Endothelial cell of umbilical vein (primary cell): ENCODE measurements at regions of chr9 and their contacts with region 1.

Region 1: GRCh38 chr9:121686930-121687541 is 35.6 kb downstream of the DAB2IP start:
- DNase-seq: peak; percentile 78
- H3K4me3 ChIP-seq: no peak overlapping the region
- H3K27ac ChIP-seq: no peak overlapping the region
- H3K4me1 ChIP-seq: no peaks in the 10 kb centered on the region
- H3K27me3 ChIP-seq: no peaks in the 10 kb centered on the region
- CTCF ChIP-seq: peak; percentile 90 to 91
- POLR2A ChIP-seq: no peak

Region 2: DNA sequence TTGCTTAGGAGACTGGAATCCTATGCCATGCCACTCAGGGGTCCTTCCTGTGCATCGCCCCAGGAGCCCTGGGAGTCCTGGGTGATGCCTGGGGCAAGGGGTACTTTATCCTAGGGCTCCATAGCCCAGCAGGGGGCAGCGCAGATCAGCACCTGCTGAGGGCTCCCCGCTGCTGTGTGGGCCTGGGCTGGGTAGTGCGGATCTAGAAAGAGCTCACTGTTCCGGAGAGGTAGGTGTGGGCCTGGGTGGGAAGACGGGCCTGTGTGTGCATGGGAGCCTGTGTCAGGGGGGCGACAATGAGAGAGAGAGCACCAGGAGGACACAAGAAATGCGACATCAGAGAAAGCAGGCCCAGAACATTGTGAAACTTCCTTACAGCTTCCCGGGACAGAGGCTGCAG is 47.0 kb before region 1 on chr9:
- CTCF ChIA-PET with region 1: interaction called, 143 read pairs
- POLR2A ChIA-PET with region 1: no interaction called
- dilution Hi-C with region 1: no loop called
- intact Hi-C with region 1: loop called (anchors 1 kb)
- DNase-seq: peak; percentile 36
- H3K4me3 ChIP-seq: no peak overlapping the region
- H3K27ac ChIP-seq: no peak overlapping the region
- H3K4me1 ChIP-seq: peaks cover 17% of the 10 kb centered on the region
- H3K27me3 ChIP-seq: no peaks in the 10 kb centered on the region
- CTCF ChIP-seq: peak; percentile 72 to 80
- POLR2A ChIP-seq: no peak

Region 3: DNA sequence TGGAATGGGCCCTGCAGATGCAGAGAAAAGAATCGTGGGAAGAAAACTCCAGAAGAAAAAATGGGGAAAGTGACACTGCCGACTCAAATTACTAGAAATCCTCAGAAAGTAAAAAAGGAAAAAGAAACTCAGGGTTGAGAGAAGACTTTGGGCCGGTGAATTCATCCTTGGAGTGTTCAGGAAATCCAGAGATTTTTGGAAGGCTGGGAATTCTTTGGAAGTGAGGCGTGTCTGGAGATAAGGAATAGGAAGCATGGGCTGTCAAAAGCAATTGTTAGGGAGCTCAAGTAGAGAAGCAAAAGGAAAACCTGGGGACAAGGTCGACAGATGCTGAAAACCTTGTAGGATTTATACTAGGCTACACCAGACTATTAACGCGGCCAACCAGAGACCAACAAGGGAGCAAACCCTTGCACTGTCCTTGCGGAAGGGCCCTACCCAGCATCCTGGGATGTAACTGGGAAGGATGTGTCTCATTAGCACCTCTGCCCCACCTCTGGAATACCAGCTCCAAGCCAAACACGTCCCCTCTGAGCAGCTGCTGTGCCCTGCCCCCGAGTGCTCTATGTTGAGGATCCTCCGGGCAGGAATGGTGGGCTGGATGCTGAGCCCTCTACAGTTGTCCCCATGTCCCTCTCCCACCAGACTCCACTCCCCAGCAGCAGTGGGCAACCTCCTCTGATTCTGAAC is 24.0 kb before region 1 on chr9:
- CTCF ChIA-PET with region 1: interaction called, 16 read pairs
- POLR2A ChIA-PET with region 1: no interaction called
- dilution Hi-C with region 1: no loop called
- intact Hi-C with region 1: no loop called
- DNase-seq: peak; percentile 49
- H3K4me3 ChIP-seq: no peak overlapping the region
- H3K27ac ChIP-seq: no peak overlapping the region
- H3K4me1 ChIP-seq: peaks cover 20% of the 10 kb centered on the region
- H3K27me3 ChIP-seq: no peaks in the 10 kb centered on the region
- CTCF ChIP-seq: no peak
- POLR2A ChIP-seq: no peak

Region 4: GRCh38 chr9:121698627-121699570 is 11.9 kb after region 1 on chr9:
- CTCF ChIA-PET with region 1: interaction called, 71 read pairs
- POLR2A ChIA-PET with region 1: no interaction called
- dilution Hi-C with region 1: no loop called
- intact Hi-C with region 1: loop called (anchors 1 kb)
- DNase-seq: peak; percentile 45
- H3K4me3 ChIP-seq: peak overlapping the region; percentile 59 to 62 (median 60)
- H3K27ac ChIP-seq: peak overlapping the region; percentile 84
- H3K4me1 ChIP-seq: peaks cover 13% of the 10 kb centered on the region
- H3K27me3 ChIP-seq: no peaks in the 10 kb centered on the region
- CTCF ChIP-seq: no peak
- POLR2A ChIP-seq: no peak

Region 5: DNA sequence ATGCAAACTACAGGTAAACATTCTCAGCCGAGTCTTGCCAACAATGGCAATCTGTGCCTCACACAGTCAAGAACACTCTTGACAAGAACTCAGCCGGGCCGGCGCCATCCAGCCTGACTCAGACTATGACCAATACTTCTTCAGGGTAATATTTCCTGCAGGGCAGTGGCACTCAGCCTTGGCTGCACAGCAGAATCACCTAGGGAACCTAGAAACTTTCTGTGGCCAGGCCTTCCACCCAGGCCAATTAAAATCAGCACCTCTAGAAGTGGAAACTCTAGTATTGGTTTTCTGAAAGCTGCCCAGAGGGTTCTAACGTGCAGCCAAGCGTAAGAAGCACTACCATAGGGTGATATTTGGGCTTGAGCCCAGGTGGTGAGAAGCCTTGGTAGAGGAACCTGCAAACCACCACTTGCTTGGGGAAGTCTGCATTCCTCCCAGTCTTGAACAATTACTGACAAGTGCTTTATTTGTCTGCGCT is 285.5 kb after region 1 on chr9:
- CTCF ChIA-PET with region 1: no interaction called
- POLR2A ChIA-PET with region 1: no interaction called
- dilution Hi-C with region 1: no loop called
- intact Hi-C with region 1: no loop called
- DNase-seq: peak; percentile 75
- H3K4me3 ChIP-seq: no peak overlapping the region
- H3K27ac ChIP-seq: peak overlapping the region; percentile 74
- H3K4me1 ChIP-seq: peaks cover 13% of the 10 kb centered on the region
- H3K27me3 ChIP-seq: no peaks in the 10 kb centered on the region
- CTCF ChIP-seq: no peak
- POLR2A ChIP-seq: no peak

Region 6: GRCh38 chr9:121992571-121993212 is 305.7 kb after region 1 on chr9:
- CTCF ChIA-PET with region 1: interaction called, 21 read pairs
- POLR2A ChIA-PET with region 1: no interaction called
- dilution Hi-C with region 1: no loop called
- intact Hi-C with region 1: loop called (anchors 1 kb)
- DNase-seq: peak; percentile 74
- H3K4me3 ChIP-seq: no peak overlapping the region
- H3K27ac ChIP-seq: no peak overlapping the region
- H3K4me1 ChIP-seq: peaks cover 5% of the 10 kb centered on the region
- H3K27me3 ChIP-seq: no peaks in the 10 kb centered on the region
- CTCF ChIP-seq: peak; percentile 58 to 68
- POLR2A ChIP-seq: no peak

Region 7: DNA sequence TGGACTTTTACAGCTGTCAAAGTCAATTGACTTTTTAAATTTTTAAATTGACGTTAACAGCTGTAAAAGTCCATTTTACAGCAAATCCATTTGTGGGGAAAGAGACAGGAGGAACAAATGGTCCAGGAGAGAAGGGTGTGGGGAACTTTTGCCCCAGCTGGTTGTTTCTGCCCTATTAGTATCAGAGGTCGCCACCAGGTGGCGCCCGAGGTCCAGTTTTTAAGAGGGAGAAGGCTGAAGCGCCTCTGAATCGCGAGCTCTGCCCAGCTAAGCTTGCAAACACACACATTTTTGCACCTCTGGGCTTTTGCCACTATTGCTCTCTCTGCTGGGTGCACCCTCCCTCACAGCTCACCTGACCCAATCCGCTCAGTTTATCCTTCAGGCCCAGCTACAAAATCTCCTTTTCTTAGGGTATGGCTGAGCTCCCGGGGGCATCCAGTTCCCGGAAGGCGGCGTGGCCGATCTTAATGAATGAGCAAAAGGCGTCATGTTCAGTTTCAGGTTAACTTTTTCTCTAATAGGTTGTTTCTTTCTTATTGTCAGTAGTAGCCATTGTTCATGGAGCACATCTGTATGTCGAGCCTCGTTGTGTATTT is 412.3 kb after region 1 on chr9:
- CTCF ChIA-PET with region 1: interaction called, 3 read pairs
- POLR2A ChIA-PET with region 1: no interaction called
- dilution Hi-C with region 1: no loop called
- intact Hi-C with region 1: loop called (anchors 5 kb)
- DNase-seq: peak; percentile 60
- H3K4me3 ChIP-seq: no peak overlapping the region
- H3K27ac ChIP-seq: no peak overlapping the region
- H3K4me1 ChIP-seq: no peaks in the 10 kb centered on the region
- H3K27me3 ChIP-seq: peaks cover 0 to 2% of the 10 kb centered on the region in 2 experiments
- CTCF ChIP-seq: peak; percentile 77 to 85
- POLR2A ChIP-seq: no peak